Activated T-helper 1 cell treated with anti-CD3 and anti-CD28 coated beads, Interleukin-12 subunit alpha, Interleukin-12 subunit beta, Interleukin-2, Interleukin-4 antibody, amounts not matched to agents 30 ng/mL and 10 ng/mL and 1 ng/mL, durations not matched to agents 14 hours and 24 hours and 36 hours (primary cell): ENCODE measurements at regions of chr15 and their contacts with region 1.

Region 1: DNA sequence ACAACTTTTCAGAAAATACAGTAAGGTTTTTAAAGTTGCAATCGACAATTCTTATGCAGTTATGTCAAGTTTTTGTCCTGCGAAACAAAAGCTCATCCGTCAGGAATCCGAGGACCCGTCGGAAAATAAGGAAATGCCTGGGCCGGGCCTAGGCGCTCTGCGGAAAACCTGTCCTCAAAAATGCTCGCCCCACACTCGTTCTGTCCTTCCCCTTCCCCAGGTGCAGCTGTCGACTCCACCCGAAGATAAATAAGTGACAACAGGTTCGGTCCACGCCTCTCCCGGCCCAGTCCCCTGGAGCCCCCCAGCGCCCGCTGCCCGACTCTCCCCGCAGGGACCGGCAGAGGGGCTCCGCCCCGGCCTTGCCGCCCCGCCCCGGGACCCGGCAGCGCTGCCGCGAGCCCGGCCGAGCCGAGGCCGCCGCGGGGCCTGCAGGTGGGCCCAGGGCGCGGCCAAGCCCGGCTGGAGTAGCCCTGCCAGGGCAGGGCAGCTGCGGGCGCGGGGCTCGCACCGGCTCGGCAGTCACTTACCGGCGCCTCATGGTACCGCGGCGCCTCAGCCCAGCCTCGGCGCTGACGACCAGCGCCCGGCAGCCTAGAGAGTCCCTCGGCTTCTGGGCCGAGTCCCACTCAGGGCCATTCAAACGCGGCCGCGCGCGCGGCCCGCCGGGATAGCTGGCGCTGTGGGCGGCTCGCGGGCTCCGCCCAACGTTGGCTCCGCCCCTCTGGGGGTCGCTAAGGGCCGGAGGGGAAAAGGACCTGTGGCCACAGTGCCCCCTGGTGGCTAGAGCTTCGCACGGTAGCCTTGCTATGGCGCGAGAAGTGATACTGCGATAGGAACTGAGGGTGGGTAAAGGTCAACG is at the start of gene KATNBL1:
- DNase-seq: peak; percentile 92
- H3K4me3 Mint-ChIP-seq: peak within 1 kb of the TSS; percentile 89
- H3K27ac Mint-ChIP-seq: peak within 1 kb of the TSS; percentile 72
- H3K4me1 Mint-ChIP-seq: peaks cover 34% of the 10 kb centered on the region
- H3K27me3 Mint-ChIP-seq: peaks cover 5% of the 10 kb centered on the region
- total RNA-seq, gene KATNBL1: 37.6 and 42.1 TPM in 2 replicates

Region 2: DNA sequence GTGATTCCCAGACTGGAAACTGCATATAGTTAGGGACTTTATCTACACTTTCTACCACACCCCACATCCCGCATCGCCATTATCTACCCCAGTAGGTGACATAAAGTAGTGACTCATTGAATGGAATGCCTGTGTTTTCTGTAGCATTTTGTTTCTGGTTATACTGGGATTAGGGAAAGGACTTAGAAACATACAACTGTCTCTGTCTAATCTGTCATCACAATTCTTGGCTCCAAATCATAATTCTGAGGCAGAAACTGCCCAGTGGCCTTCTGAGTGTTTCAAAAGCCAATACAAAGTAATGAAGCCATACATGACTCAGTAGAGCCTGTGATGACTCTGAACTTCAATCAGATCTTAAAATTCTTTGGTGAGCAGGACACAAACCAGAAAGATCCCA is 357.1 kb before region 1 on chr15:
- intact Hi-C with region 1: no loop called
- DNase-seq: no peak
- H3K4me3 Mint-ChIP-seq: no peak overlapping the region
- H3K27ac Mint-ChIP-seq: no peak overlapping the region
- H3K4me1 Mint-ChIP-seq: no peaks in the 10 kb centered on the region
- H3K27me3 Mint-ChIP-seq: peaks cover 2% of the 10 kb centered on the region

Region 3: DNA sequence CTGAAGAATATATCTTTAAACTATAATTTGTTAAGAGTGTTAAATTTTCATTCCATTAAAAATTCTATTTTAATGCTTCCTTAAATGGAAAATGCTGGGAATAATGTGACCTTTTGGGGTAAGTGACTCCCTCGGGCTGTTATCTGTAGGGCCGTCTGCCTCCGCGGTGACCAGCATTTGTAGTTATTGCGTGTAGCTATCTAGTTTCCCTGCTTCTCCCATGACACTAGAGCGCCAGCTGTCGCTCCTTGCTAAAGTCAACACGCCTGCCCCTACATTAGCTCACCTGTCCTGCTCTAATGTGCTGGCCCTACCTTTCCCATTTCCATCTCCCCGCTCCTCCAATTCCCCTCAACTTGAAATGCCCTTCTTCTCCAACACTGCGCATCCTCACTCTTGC is 253.7 kb before region 1 on chr15:
- intact Hi-C with region 1: no loop called
- DNase-seq: no peak
- H3K4me3 Mint-ChIP-seq: no peak overlapping the region
- H3K27ac Mint-ChIP-seq: no peak overlapping the region
- H3K4me1 Mint-ChIP-seq: no peaks in the 10 kb centered on the region
- H3K27me3 Mint-ChIP-seq: no peaks in the 10 kb centered on the region

Region 4: DNA sequence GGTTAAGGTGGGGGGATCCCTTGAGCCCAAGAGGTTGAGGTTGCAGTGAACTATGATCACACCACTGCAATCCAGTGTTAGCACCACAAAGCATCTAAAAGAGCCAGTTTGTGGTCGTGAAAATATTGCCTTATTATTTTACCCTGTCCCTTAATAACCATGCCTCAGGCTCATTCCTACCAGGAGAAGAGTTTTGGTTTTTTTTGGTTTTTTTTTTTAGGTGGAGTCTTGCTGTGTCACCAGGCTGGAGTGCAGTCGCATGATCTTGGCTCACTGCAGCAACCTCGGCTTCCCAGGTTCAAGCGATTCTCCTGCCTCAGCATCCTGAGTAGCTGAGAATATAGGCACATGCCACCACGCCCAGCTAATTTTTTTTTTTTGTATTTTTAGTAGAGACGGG is 152.7 kb before region 1 on chr15:
- intact Hi-C with region 1: loop called (anchors 1 kb)
- DNase-seq: no peak
- H3K4me3 Mint-ChIP-seq: no peak overlapping the region
- H3K27ac Mint-ChIP-seq: no peak overlapping the region
- H3K4me1 Mint-ChIP-seq: no peaks in the 10 kb centered on the region
- H3K27me3 Mint-ChIP-seq: peaks cover 5% of the 10 kb centered on the region

Region 5: GRCh38 chr15:34109797-34110663 is 99.6 kb before region 1 on chr15:
- intact Hi-C with region 1: loop called (anchors 1 kb)
- DNase-seq: no peak
- H3K4me3 Mint-ChIP-seq: no peak overlapping the region
- H3K27ac Mint-ChIP-seq: no peak overlapping the region
- H3K4me1 Mint-ChIP-seq: peaks cover 6% of the 10 kb centered on the region
- H3K27me3 Mint-ChIP-seq: peaks cover 3% of the 10 kb centered on the region

Region 6: DNA sequence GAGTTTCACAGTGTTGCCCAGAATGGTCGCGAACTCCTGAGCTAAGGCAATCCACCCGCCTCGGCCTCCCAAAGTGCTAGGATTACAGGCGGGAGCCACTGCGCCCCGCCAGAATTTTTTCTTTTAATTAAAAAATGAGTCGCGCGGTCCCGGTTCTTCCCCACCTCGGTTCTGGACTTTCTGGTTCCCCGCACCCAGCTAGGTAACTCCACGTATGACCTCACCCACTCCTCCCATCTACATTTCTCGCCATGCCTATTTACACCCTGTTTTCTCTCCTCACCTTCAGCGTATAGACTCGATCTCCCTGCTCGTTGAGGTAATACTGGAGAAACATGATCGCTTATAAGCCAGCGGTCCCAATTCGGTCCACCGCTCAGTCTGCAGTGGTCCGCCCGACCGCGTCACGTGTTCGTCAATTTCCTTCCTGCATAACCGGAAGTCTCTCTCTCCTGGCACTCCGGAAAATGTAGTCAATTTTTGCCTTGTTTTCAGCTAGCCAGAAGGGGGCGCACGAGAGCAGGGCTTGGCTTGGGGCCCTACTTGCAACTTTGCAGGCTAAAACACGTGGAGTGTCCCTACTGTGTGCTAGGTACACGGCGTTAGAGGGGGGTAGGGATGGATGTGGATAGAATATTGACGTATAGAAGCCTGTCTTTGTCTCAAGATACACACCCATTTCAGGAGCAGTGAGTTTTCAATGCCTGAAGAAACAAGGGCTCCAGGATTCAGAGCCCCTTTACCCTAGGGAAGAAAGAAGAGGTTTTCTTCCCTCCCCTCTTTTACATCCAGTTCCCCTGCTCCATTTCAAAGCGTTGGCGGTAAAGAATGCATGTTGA is 133.3 kb after region 1 on chr15 and contains the starts of genes NOP10 and NUTM1:
- intact Hi-C with region 1: loop called (anchors 1 kb)
- DNase-seq: peak; percentile 91
- H3K4me3 Mint-ChIP-seq: no peak within 1 kb of the TSS
- H3K27ac Mint-ChIP-seq: peak within 1 kb of the TSS; percentile 88
- H3K4me1 Mint-ChIP-seq: peaks cover 26% of the 10 kb centered on the region
- H3K27me3 Mint-ChIP-seq: no peaks in the 10 kb centered on the region
- total RNA-seq, gene NOP10: 257 and 267 TPM in 2 replicates
- total RNA-seq, gene NUTM1: not detected in 2 replicates

Region 7: GRCh38 chr15:34437687-34438086 is 228.0 kb after region 1 on chr15 and contains the start of gene GOLGA8A:
- intact Hi-C with region 1: loop called (anchors 5 kb)
- DNase-seq: peak; percentile 80
- H3K4me3 Mint-ChIP-seq: peak within 1 kb of the TSS; percentile 91
- H3K27ac Mint-ChIP-seq: peak within 1 kb of the TSS; percentile 98
- H3K4me1 Mint-ChIP-seq: peaks cover 29% of the 10 kb centered on the region
- H3K27me3 Mint-ChIP-seq: peaks cover 14% of the 10 kb centered on the region
- total RNA-seq, gene GOLGA8A: 264 and 275 TPM in 2 replicates